MCF 10A (cell line): ENCODE measurements at regions of chr9 and their contacts with region 1.

Region 1: GRCh38 chr9:113446323-113446740 is 17.2 kb upstream of the RGS3 start:
- DNase-seq: peak; percentile 51
- H3K4me3 Mint-ChIP-seq: no peak overlapping the region
- H3K27ac Mint-ChIP-seq: no peak overlapping the region
- H3K4me1 Mint-ChIP-seq: no peaks in the 10 kb centered on the region
- H3K27me3 Mint-ChIP-seq: no peaks in the 10 kb centered on the region
- CTCF ChIP-seq: peak; percentile 66

Region 2: GRCh38 chr9:111957856-111958652 is 1488.3 kb before region 1 on chr9:
- CTCF ChIA-PET with region 1: no interaction called
- POLR2A ChIA-PET with region 1: no interaction called
- intact Hi-C with region 1: no loop called
- DNase-seq: peak; percentile 89
- H3K4me3 Mint-ChIP-seq: peak overlapping the region; percentile 68
- H3K27ac Mint-ChIP-seq: peak overlapping the region; percentile 85
- H3K4me1 Mint-ChIP-seq: peaks cover 36% of the 10 kb centered on the region
- H3K27me3 Mint-ChIP-seq: no peaks in the 10 kb centered on the region
- CTCF ChIP-seq: no peak

Region 3: GRCh38 chr9:113267911-113268566 is 178.3 kb before region 1 on chr9:
- CTCF ChIA-PET with region 1: no interaction called
- POLR2A ChIA-PET with region 1: no interaction called
- intact Hi-C with region 1: no loop called
- DNase-seq: no peak
- H3K4me3 Mint-ChIP-seq: no peak overlapping the region
- H3K27ac Mint-ChIP-seq: no peak overlapping the region
- H3K4me1 Mint-ChIP-seq: peaks cover 5% of the 10 kb centered on the region
- H3K27me3 Mint-ChIP-seq: no peaks in the 10 kb centered on the region
- CTCF ChIP-seq: no peak

Region 4: GRCh38 chr9:113427629-113428028 is 18.7 kb before region 1 on chr9:
- CTCF ChIA-PET with region 1: interaction called, 14 read pairs
- POLR2A ChIA-PET with region 1: no interaction called
- intact Hi-C with region 1: no loop called
- DNase-seq: peak; percentile 68
- H3K4me3 Mint-ChIP-seq: no peak overlapping the region
- H3K27ac Mint-ChIP-seq: peak overlapping the region; percentile 76
- H3K4me1 Mint-ChIP-seq: peaks cover 6% of the 10 kb centered on the region
- H3K27me3 Mint-ChIP-seq: peaks cover 5% of the 10 kb centered on the region
- CTCF ChIP-seq: no peak